GM12878 (cell line): ENCODE measurements at regions of chr1 and their contacts with region 1.

Region 1: GRCh38 chr1:185238447-185238846 is 78.6 kb downstream of the IVNS1ABP start:
- DNase-seq: no peak
- ATAC-seq: peak; percentile 50
- H3K4me3 ChIP-seq: no peak overlapping the region
- H3K27ac ChIP-seq: no peak overlapping the region
- H3K4me1 ChIP-seq: no peaks in the 10 kb centered on the region
- H3K27me3 ChIP-seq: no peaks in the 10 kb centered on the region
- CTCF ChIP-seq: peak; percentile 29 to 40 (median 29); a peak in 4 of 6 replicates
- EP300 ChIP-seq: no peak
- POLR2A ChIP-seq: no peak
- RAD21 ChIP-seq: peak; percentile 39

Region 2: DNA sequence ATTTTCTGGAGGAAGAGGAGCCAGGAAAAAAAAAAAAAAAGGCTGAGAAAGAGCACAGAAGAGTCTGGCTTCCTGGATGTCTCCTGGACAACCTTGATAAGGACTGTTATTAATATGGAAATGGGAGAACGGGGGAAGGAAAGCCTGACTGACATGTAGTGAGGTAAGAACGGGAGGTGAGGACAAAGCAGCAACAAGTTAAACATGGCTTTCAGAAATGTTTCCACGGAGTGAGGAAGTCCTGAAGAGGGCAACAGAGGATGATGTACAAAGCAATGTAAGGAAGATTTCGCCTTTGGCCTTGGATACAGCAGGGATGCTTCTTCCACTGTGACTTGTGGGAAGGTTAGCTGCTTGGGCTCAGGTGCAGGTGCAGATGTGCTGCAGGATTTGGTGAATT is 252.2 kb before region 1 on chr1:
- CTCF ChIA-PET with region 1: no interaction called
- POLR2A ChIA-PET with region 1: no interaction called
- RAD21 ChIA-PET with region 1: no interaction called
- SMC1A ChIA-PET with region 1: no interaction called
- in situ Hi-C with region 1: no loop called
- intact Hi-C with region 1: no loop called
- DNase-seq: no peak
- ATAC-seq: 0 out of 3 replicates have a peak, but pooled peaks have one; percentile 9
- H3K4me3 ChIP-seq: no peak overlapping the region
- H3K27ac ChIP-seq: no peak overlapping the region
- H3K4me1 ChIP-seq: no peaks in the 10 kb centered on the region
- H3K27me3 ChIP-seq: no peaks in the 10 kb centered on the region; a peak in 1 of 4 replicates
- CTCF ChIP-seq: peak in 1 of 3 experiments; percentile 48; a peak in 2 of 6 replicates
- EP300 ChIP-seq: no peak
- POLR2A ChIP-seq: no peak
- RAD21 ChIP-seq: peak; percentile 44; the same call in 1 of the 2 replicates

Region 3: GRCh38 chr1:185559684-185560331 is 321.4 kb after region 1 on chr1:
- CTCF ChIA-PET with region 1: interaction called, 7 read pairs
- POLR2A ChIA-PET with region 1: no interaction called
- RAD21 ChIA-PET with region 1: interaction called, 13 read pairs
- SMC1A ChIA-PET with region 1: interaction called, 3 read pairs
- in situ Hi-C with region 1: no loop called
- intact Hi-C with region 1: no loop called
- DNase-seq: peak; percentile 72
- ATAC-seq: peak; percentile 96
- H3K4me3 ChIP-seq: no peak overlapping the region
- H3K27ac ChIP-seq: no peak overlapping the region
- H3K4me1 ChIP-seq: peaks cover 7% of the 10 kb centered on the region
- H3K27me3 ChIP-seq: no peaks in the 10 kb centered on the region
- CTCF ChIP-seq: peak; percentile 34 to 51 (median 46)
- EP300 ChIP-seq: peak in 1 of 2 experiments; percentile 66; a peak in 2 of 4 replicates
- POLR2A ChIP-seq: no peak
- RAD21 ChIP-seq: peak; percentile 59

Region 4: DNA sequence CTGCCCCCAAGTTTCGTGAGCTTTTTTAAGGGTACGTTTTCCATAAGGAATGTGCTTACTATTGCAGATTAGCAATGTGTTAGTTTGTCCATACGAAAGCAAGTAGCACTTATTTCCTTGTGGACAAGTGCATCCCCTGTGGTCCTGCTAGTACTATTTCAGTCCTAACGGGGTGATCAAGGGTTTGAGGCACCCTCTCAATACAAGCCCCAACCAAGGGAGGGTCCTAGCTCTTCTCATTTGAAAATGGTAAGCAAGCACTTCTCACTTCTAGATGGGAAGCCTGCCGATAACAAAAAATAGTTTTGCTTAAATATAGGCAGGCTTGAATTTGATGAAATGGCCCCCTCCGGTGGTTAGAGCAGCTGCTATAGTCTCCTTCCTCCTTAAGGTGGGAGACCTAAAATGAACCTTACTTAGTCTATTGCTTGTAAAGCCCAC is 431.8 kb after region 1 on chr1:
- CTCF ChIA-PET with region 1: interaction called, 15 read pairs
- POLR2A ChIA-PET with region 1: no interaction called
- RAD21 ChIA-PET with region 1: interaction called, 17 read pairs
- SMC1A ChIA-PET with region 1: interaction called, 28 read pairs
- in situ Hi-C with region 1: no loop called
- intact Hi-C with region 1: no loop called
- DNase-seq: no peak
- ATAC-seq: peak; percentile 69
- H3K4me3 ChIP-seq: no peak overlapping the region
- H3K27ac ChIP-seq: no peak overlapping the region
- H3K4me1 ChIP-seq: no peaks in the 10 kb centered on the region
- H3K27me3 ChIP-seq: no peaks in the 10 kb centered on the region; a peak in 1 of 4 replicates
- CTCF ChIP-seq: peak; percentile 18 to 39 (median 21); a peak in 3 of 6 replicates
- EP300 ChIP-seq: no peak
- POLR2A ChIP-seq: no peak
- RAD21 ChIP-seq: peak; percentile 55